Calu3 (cell line): ENCODE measurements at regions of chrX and their contacts with region 1.

Region 1: DNA sequence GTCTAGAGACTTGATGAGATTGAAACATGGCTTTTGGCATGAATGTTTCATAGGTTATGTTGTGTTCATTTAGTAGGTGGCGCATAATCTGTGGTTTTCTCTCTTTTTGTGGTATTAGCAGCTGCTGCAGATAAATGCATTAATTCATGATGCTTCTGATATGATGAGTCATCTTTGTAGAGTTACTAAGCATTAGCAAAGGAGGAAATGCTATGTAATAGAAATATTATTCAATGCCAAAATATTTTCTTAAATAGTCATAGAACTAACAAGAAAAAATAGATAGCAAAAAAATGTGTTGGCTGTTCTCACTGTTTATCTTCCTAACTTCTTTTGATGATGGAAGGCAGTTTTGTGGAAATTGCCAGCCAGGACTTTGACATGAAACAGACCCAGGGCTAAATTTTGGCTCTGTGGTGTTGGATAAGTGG is 3.6 kb downstream of the ZXDB start:
- DNase-seq: no peak
- H3K4me3 Mint-ChIP-seq: peak overlapping the region; percentile 60
- H3K27ac Mint-ChIP-seq: peak overlapping the region; percentile 4
- H3K4me1 Mint-ChIP-seq: peaks cover 27% of the 10 kb centered on the region
- H3K27me3 Mint-ChIP-seq: no peaks in the 10 kb centered on the region
- CTCF ChIP-seq: no peak

Region 2: GRCh38 chrX:57906790-57907189 is 311.4 kb after region 1 on chrX:
- CTCF ChIA-PET with region 1: no interaction called
- intact Hi-C with region 1: loop called (anchors 5 kb)
- DNase-seq: no peak
- H3K4me3 Mint-ChIP-seq: no peak overlapping the region
- H3K27ac Mint-ChIP-seq: peak overlapping the region; percentile 24
- H3K4me1 Mint-ChIP-seq: peaks cover 17% of the 10 kb centered on the region
- H3K27me3 Mint-ChIP-seq: no peaks in the 10 kb centered on the region
- CTCF ChIP-seq: no peak